Pancreas (tissue), 10 donors: ENCODE measurements at regions of chr16 and their contacts with region 1.

Region 1: GRCh38 chr16:10521681-10522274 is 58.6 kb downstream of the EMP2 start:
- DNase-seq: peak in 3 of 6 donors; percentile 47 to 69 (median 60)
- ATAC-seq: peak; percentile 66 to 97 (median 90)
- H3K4me3 ChIP-seq: no peak overlapping the region
- H3K27ac ChIP-seq: no peak overlapping the region
- H3K4me1 ChIP-seq: peaks cover 0 to 8% (median 0%) of the 10 kb centered on the region in 3 donors
- H3K27me3 ChIP-seq: no peaks in the 10 kb centered on the region
- CTCF ChIP-seq: peak; percentile 24 to 84 (median 77)

Region 2: GRCh38 chr16:10385725-10386516 is 135.9 kb before region 1 on chr16 and contains the start of gene ATF7IP2:
- intact Hi-C with region 1: no loop called
- DNase-seq: peak; percentile 88 to 94 (median 90)
- ATAC-seq: peak; percentile 96 to 98 (median 96)
- H3K4me3 ChIP-seq: peak within 1 kb of the TSS; percentile 27 to 55 (median 44)
- H3K27ac ChIP-seq: peak within 1 kb of the TSS; percentile 37 to 76 (median 54)
- H3K4me1 ChIP-seq: no peaks in the 10 kb centered on the region
- H3K27me3 ChIP-seq: no peaks in the 10 kb centered on the region
- CTCF ChIP-seq: no peak
- total RNA-seq, gene ATF7IP2: 11.0 to 17.4 (median 15.4) TPM

Region 3: DNA sequence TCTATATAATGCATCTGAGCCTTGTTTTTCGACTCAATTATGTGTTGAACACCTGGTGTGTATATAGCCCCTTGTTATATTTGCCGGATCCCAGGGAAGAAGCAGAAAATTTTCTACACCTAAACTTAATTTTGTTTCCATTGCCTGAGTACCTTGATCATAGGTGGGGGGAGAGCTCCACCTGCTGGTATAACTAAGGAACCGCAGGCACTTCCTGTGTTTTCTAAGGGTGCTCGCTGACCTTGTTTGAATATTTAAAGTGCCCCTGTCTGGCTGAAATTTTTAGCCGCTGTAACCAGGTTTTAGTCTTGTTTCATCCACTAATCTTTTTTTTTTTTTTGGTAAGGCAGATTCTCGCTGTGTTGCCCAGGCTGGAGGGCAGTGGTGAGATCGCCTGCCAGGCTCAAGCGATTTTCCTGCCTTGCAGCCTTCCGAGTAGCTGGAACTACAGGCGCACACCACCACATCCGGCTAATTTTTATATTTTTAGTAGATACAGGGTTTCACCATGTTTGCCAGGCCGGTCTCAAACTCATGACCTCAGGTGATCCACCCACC is 215.4 kb after region 1 on chr16:
- intact Hi-C with region 1: loop called in 2 of 3 experiments (anchors 5 kb)
- DNase-seq: peak in 3 of 6 donors; percentile 58 to 82 (median 60)
- ATAC-seq: peak; percentile 85 to 90 (median 89)
- H3K4me3 ChIP-seq: peak overlapping the region in 3 of 4 donors; percentile 5 to 41 (median 31)
- H3K27ac ChIP-seq: peak overlapping the region in 3 of 4 donors; percentile 17 to 54 (median 50)
- H3K4me1 ChIP-seq: peaks cover 0 to 20% (median 2%) of the 10 kb centered on the region in 3 donors
- H3K27me3 ChIP-seq: no peaks in the 10 kb centered on the region
- CTCF ChIP-seq: peak; percentile 79 to 88 (median 84)